ENCODE measurements at regions of chr11 and their contacts with region 1.

Region 1: DNA sequence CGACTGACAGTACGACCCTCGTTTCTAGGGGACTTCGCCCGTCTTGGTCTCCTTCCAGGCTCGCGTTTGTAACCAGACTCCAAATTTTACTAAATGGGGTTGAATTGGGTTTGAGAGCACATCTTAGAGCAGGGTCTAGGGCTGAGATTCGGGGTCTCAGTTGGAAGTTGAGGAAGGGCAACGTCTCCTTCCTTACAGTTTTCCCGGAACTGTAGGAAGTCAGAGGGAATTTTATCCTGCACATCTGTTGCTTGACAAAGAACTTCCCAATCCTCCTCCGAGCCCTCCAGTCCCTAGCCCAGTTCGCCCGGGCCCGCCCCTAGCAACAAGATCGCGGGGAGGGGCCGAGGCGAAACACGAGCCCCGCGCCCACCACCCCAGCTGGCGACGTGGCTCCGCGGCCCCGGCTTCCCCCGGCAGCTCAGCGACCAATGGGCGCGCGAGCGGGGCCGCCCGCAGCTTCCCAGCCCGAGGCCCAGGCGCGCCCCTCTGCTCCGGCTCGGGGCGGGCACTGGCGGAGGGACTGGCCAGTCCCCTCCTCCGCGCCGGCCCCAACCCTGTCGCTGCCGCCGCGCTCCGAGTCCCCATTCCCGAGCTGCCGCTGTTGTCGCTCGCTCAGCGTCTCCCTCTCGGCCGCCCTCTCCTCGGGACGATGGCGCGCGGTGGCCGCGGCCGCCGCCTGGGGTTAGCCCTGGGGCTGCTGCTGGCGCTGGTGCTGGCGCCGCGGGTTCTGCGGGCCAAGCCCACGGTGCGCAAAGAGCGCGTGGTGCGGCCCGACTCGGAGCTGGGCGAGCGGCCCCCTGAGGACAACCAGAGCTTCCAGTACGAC is at the start of gene RCN1:
- DNase-seq: peak; percentile 71

Region 2: GRCh38 chr11:32006799-32007388 is 83.9 kb before region 1 on chr11:
- CTCF ChIA-PET with region 1: no interaction called
- POLR2A ChIA-PET with region 1: no interaction called
- DNase-seq: peak; percentile 61

Region 3: GRCh38 chr11:32071811-32072210 is 18.9 kb before region 1 on chr11:
- CTCF ChIA-PET with region 1: interaction called, 3 read pairs
- POLR2A ChIA-PET with region 1: interaction called, 10 read pairs
- DNase-seq: peak; percentile 53